PC-3 (cell line): ENCODE measurements at regions of chr1 and their contacts with region 1.

Region 1: DNA sequence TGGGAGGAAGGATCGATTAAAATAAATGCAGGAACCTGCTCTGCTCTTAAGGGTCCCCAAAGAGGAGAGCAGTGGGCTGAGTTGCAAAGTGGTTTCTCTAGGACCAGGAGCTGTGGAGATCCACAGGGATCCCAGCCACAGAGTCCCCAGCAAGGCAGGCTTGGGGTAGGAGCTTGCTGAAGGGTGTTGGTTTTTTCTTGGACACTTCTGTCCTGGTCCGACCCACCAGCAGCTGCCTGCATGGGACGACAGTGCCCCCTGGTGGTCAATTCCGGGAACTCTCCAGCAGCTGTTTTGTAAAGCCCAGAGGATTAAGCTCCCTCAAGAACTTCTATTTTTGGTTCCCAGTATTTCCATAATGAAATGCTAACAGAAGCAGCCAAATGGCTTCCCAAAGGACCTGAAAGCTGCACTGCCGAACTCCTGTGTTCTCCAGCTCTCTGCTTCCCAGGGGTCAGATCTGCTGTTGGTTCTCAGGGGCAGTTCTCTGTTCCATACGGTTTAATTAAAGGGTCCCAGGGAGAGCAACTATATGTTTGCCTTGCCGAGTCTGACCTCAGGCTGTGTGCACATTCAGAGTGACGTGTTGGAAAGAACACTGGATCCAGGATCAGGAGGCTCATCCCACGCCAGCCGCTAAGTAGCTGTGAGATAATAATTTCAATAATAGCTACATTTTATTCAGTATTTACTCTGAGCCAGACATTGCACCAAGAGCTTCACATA is 23.2 kb downstream of the NENF start:
- DNase-seq: peak; percentile 98
- ATAC-seq: peak; percentile 94
- H3K4me3 ChIP-seq: 0 out of 2 replicates have a peak overlapping the region, but pooled peaks have one; percentile 20
- H3K27ac ChIP-seq: no peak overlapping the region
- H3K4me1 ChIP-seq: peaks cover 3% of the 10 kb centered on the region; the same call in 1 of the 2 replicates
- H3K27me3 ChIP-seq: no peaks in the 10 kb centered on the region
- CTCF ChIP-seq: peak; percentile 100

Region 2: DNA sequence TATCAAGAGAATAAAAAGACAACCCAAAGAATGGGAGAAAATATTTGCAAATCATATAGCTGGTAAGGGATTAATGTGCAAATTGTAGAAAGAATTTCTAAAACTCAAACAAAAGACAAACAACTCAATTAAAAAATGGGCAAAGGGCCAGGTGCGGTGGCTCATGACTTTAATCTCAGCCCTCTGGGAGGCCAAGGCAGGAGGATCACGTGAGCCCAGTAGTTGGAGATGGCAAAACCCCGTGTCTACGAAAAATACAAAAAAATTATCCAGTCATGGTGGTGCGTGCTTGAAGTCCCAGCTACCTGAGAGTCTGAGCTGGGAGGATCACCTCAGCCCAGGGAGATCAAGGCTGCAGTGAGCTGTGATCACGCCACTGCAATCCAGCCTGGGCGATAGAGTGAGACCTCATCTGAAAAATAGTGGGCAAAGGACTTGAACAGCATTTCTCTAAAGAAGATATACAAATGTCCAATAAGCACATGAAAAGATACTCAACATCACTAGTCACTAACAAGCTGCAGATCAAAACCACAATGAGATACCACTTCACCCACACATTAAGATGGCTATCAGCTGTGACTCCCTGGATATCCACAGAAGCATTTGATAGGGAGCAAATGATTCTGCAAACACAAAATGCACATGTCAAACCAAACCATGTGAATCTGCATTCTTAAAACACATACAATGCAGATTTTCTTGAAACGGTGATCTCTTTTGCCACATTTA is 897.9 kb before region 1 on chr1:
- CTCF ChIA-PET with region 1: no interaction called
- POLR2A ChIA-PET with region 1: no interaction called
- intact Hi-C with region 1: no loop called
- DNase-seq: no peak
- ATAC-seq: no peak
- H3K4me3 ChIP-seq: no peak overlapping the region
- H3K27ac ChIP-seq: no peak overlapping the region
- H3K4me1 ChIP-seq: no peaks in the 10 kb centered on the region
- H3K27me3 ChIP-seq: no peaks in the 10 kb centered on the region
- CTCF ChIP-seq: no peak

Region 3: DNA sequence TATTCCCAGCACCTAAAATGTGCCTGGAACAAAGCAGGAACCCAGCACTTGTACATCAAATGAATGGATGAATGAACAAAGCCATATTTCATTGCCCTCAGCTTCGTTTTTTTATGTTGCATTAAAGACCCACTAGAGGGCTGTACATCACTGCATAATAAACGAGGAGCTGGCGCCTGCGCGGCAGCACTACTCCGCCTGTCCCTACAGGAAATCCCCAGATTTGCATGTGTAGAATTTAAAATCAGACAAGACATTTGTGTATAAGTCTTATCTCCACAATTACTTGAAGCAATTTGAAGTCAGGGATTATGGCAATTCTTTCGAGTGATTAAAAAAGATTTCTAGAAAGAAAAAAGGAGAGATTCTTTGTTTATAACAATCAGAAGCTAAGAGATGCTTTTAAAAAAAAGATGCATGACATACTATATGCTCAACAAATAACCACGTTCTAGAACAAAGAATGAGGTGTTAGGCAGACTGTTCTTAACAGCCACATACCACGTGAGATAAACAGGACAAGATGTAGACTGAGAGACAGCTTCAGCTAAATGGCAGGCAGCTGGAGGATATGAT is 775.1 kb before region 1 on chr1:
- CTCF ChIA-PET with region 1: interaction called, 13 read pairs
- POLR2A ChIA-PET with region 1: interaction called, 3 read pairs
- intact Hi-C with region 1: loop called (anchors 1 kb)
- DNase-seq: peak; percentile 94
- ATAC-seq: peak; percentile 90
- H3K4me3 ChIP-seq: no peak overlapping the region
- H3K27ac ChIP-seq: no peak overlapping the region
- H3K4me1 ChIP-seq: peaks cover 7% of the 10 kb centered on the region; the same call in 1 of the 2 replicates
- H3K27me3 ChIP-seq: no peaks in the 10 kb centered on the region
- CTCF ChIP-seq: peak; percentile 91

Region 4: GRCh38 chr1:212035123-212035834 is 420.7 kb before region 1 on chr1 and contains the starts of genes DTL and INTS7:
- CTCF ChIA-PET with region 1: interaction called, 22 read pairs
- POLR2A ChIA-PET with region 1: no interaction called
- intact Hi-C with region 1: no loop called
- DNase-seq: peak; percentile 100
- ATAC-seq: peak; percentile 75
- H3K4me3 ChIP-seq: peak within 1 kb of the TSS; percentile 88
- H3K27ac ChIP-seq: peak within 1 kb of the TSS; percentile 80
- H3K4me1 ChIP-seq: peaks cover 61% of the 10 kb centered on the region
- H3K27me3 ChIP-seq: no peaks in the 10 kb centered on the region
- CTCF ChIP-seq: peak; percentile 98
- total RNA-seq, gene DTL: 57.9 and 65.0 TPM in 2 replicates
- total RNA-seq, gene INTS7: 25.3 and 28.3 TPM in 2 replicates

Region 5: DNA sequence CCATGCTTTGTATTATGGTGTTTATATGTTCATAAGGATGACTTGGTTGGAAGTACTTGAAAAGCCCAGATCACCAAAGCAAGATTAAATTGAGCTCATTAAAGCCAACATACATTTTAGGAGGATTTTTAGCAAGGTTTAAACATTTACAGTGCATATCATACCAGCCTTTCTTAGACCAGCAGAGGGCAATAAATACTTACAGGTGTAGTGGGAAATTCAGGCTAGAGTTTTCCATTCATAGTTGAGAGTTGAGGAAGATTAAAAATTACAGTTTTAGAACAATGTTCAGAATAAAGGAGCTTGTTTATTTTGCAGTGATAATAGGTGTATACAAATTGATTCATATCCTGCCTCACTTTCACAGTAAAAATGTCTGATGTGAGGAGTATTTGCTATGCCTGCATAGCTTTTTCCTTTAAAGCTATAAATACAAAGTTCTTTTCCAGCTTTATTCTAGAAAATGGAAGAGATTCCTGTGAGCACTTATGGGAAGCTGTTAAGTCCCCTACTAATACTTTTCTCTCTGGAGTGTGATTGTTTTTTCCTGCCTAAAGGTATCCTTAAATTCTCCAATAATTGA is 385.2 kb before region 1 on chr1:
- CTCF ChIA-PET with region 1: interaction called, 78 read pairs
- POLR2A ChIA-PET with region 1: no interaction called
- intact Hi-C with region 1: loop called (anchors 1 kb)
- DNase-seq: peak; percentile 76
- ATAC-seq: peak; percentile 99
- H3K4me3 ChIP-seq: no peak overlapping the region
- H3K27ac ChIP-seq: no peak overlapping the region
- H3K4me1 ChIP-seq: no peaks in the 10 kb centered on the region
- H3K27me3 ChIP-seq: no peaks in the 10 kb centered on the region
- CTCF ChIP-seq: peak; percentile 98

Region 6: GRCh38 chr1:212368073-212368484 is 87.9 kb before region 1 on chr1:
- CTCF ChIA-PET with region 1: interaction called, 7 read pairs
- POLR2A ChIA-PET with region 1: no interaction called
- intact Hi-C with region 1: loop called (anchors 1 kb)
- DNase-seq: peak; percentile 94
- ATAC-seq: peak; percentile 99
- H3K4me3 ChIP-seq: no peak overlapping the region
- H3K27ac ChIP-seq: no peak overlapping the region
- H3K4me1 ChIP-seq: no peaks in the 10 kb centered on the region
- H3K27me3 ChIP-seq: no peaks in the 10 kb centered on the region
- CTCF ChIP-seq: peak; percentile 99

Region 7: GRCh38 chr1:212469701-212470458 is 13.9 kb after region 1 on chr1:
- CTCF ChIA-PET with region 1: interaction called, 19 read pairs
- POLR2A ChIA-PET with region 1: no interaction called
- intact Hi-C with region 1: no loop called
- DNase-seq: peak; percentile 99
- ATAC-seq: peak; percentile 99
- H3K4me3 ChIP-seq: no peak overlapping the region; the same call in 1 of the 2 replicates
- H3K27ac ChIP-seq: peak overlapping the region; percentile 80
- H3K4me1 ChIP-seq: peaks cover 17% of the 10 kb centered on the region
- H3K27me3 ChIP-seq: no peaks in the 10 kb centered on the region
- CTCF ChIP-seq: no peak

Region 8: GRCh38 chr1:212518188-212519054 is 62.5 kb after region 1 on chr1:
- CTCF ChIA-PET with region 1: no interaction called
- POLR2A ChIA-PET with region 1: no interaction called
- intact Hi-C with region 1: no loop called
- DNase-seq: peak; percentile 33
- ATAC-seq: peak; percentile 9; the same call in 1 of the 2 replicates
- H3K4me3 ChIP-seq: no peak overlapping the region
- H3K27ac ChIP-seq: no peak overlapping the region
- H3K4me1 ChIP-seq: peaks cover 9% of the 10 kb centered on the region
- H3K27me3 ChIP-seq: peaks cover 3% of the 10 kb centered on the region; the same call in 1 of the 2 replicates
- CTCF ChIP-seq: no peak

Region 9: DNA sequence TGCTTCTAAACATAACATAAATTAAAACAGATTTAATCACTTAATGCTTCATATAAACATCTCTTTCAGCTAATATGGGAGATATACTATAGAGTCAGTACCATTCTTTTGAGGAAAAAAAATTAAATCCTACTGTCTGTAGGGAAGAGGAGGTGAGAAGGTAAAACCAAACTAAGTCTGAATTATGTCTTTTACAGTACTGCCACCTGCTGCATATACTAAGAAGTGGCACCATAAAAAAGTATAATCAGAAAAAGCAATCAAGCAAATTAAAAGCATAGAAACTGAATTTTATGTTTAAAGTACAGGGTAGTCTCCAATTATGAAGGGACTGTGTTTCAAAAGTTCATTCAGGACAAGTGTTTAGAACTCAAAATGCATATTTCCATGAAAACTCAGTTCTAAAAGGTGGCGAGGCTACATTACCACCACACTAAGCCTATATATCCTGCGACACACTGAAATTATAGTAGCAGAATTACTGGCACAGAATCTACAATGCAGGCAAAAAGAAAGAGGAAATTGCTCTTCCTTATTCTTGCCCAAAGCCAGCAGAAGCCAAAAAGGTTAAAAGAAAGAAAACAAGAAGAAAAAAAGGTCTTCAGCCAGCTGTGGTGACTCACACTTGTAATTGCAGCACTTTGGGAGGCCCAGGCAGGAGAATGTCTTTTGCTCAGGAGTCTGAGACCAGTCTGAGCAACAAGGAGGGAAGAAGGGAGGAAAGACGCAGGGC is 326.6 kb after region 1 on chr1:
- CTCF ChIA-PET with region 1: no interaction called
- POLR2A ChIA-PET with region 1: no interaction called
- intact Hi-C with region 1: loop called (anchors 5 kb)
- DNase-seq: peak; percentile 57
- ATAC-seq: peak; percentile 64
- H3K4me3 ChIP-seq: no peak overlapping the region
- H3K27ac ChIP-seq: no peak overlapping the region
- H3K4me1 ChIP-seq: no peaks in the 10 kb centered on the region
- H3K27me3 ChIP-seq: no peaks in the 10 kb centered on the region
- CTCF ChIP-seq: peak; percentile 91